GM12878 (cell line): ENCODE measurements at regions of chr11 and their contacts with region 1.

Region 1: DNA sequence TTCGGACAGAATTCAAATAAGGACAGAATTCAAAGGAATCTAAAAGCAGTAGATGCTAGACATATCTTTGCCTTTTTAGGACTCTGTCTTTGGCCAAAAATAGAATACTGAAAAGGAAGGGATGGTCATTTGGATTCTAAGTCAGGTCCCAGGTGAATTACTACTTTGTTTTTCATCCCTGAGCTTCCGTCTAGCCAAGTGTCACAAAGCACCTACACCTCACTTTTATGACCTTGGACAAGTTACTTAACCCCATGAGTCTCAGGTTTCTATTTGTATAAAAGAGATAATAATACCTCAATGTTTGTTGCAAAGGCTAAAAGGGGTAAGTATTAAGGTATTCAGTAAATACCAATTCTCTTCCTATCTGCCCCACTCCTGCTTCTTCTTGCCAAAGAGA is 7.3 kb downstream of the KIF18A start:
- DNase-seq: no peak
- ATAC-seq: no peak
- H3K4me3 ChIP-seq: no peak overlapping the region
- H3K27ac ChIP-seq: no peak overlapping the region
- H3K4me1 ChIP-seq: no peaks in the 10 kb centered on the region; the same call in 1 of the 2 replicates
- H3K27me3 ChIP-seq: no peaks in the 10 kb centered on the region
- CTCF ChIP-seq: no peak
- EP300 ChIP-seq: no peak
- POLR2A ChIP-seq: no peak
- RAD21 ChIP-seq: no peak

Region 2: GRCh38 chr11:28043930-28044709 is 56.5 kb before region 1 on chr11:
- CTCF ChIA-PET with region 1: no interaction called
- POLR2A ChIA-PET with region 1: no interaction called
- RAD21 ChIA-PET with region 1: no interaction called
- SMC1A ChIA-PET with region 1: no interaction called
- in situ Hi-C with region 1: no loop called
- intact Hi-C with region 1: no loop called
- DNase-seq: no peak
- ATAC-seq: no peak
- H3K4me3 ChIP-seq: no peak overlapping the region
- H3K27ac ChIP-seq: no peak overlapping the region
- H3K4me1 ChIP-seq: no peaks in the 10 kb centered on the region
- H3K27me3 ChIP-seq: no peaks in the 10 kb centered on the region
- CTCF ChIP-seq: no peak
- EP300 ChIP-seq: no peak
- POLR2A ChIP-seq: no peak
- RAD21 ChIP-seq: no peak

Region 3: DNA sequence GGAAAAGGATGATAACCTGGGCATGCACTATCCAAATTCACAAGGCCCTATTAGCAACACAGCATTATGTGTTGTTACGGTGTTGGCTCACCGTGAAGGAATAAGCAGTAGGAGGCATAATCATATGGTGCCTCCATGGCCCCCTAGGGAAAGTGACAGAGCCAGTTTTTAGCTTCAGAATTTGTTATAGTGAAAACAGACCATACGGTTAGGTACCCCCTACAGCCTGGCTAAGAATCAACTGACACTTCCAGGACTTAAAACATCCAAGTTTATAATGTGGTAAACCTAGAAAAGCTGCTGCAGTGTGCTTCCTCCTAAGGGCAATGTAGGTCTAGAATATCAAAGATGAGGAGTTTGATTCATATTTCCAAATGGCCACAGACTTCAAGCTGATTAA is 23.1 kb before region 1 on chr11:
- CTCF ChIA-PET with region 1: no interaction called
- POLR2A ChIA-PET with region 1: interaction called, 6 read pairs
- RAD21 ChIA-PET with region 1: no interaction called
- SMC1A ChIA-PET with region 1: interaction called, 11 read pairs
- in situ Hi-C with region 1: no loop called
- intact Hi-C with region 1: no loop called
- DNase-seq: no peak
- ATAC-seq: no peak
- H3K4me3 ChIP-seq: no peak overlapping the region
- H3K27ac ChIP-seq: no peak overlapping the region
- H3K4me1 ChIP-seq: no peaks in the 10 kb centered on the region
- H3K27me3 ChIP-seq: no peaks in the 10 kb centered on the region
- CTCF ChIP-seq: no peak
- EP300 ChIP-seq: no peak
- POLR2A ChIP-seq: no peak
- RAD21 ChIP-seq: no peak

Region 4: GRCh38 chr11:29300441-29300840 is 1199.8 kb after region 1 on chr11:
- CTCF ChIA-PET with region 1: no interaction called
- POLR2A ChIA-PET with region 1: no interaction called
- RAD21 ChIA-PET with region 1: no interaction called
- SMC1A ChIA-PET with region 1: no interaction called
- in situ Hi-C with region 1: no loop called
- intact Hi-C with region 1: no loop called
- DNase-seq: no peak
- ATAC-seq: no peak
- H3K4me3 ChIP-seq: no peak overlapping the region
- H3K27ac ChIP-seq: no peak overlapping the region
- H3K4me1 ChIP-seq: no peaks in the 10 kb centered on the region
- H3K27me3 ChIP-seq: no peaks in the 10 kb centered on the region
- CTCF ChIP-seq: no peak
- EP300 ChIP-seq: no peak
- POLR2A ChIP-seq: no peak
- RAD21 ChIP-seq: no peak